ENCODE measurements at regions of chr1 and their contacts with region 1.

Region 1: DNA sequence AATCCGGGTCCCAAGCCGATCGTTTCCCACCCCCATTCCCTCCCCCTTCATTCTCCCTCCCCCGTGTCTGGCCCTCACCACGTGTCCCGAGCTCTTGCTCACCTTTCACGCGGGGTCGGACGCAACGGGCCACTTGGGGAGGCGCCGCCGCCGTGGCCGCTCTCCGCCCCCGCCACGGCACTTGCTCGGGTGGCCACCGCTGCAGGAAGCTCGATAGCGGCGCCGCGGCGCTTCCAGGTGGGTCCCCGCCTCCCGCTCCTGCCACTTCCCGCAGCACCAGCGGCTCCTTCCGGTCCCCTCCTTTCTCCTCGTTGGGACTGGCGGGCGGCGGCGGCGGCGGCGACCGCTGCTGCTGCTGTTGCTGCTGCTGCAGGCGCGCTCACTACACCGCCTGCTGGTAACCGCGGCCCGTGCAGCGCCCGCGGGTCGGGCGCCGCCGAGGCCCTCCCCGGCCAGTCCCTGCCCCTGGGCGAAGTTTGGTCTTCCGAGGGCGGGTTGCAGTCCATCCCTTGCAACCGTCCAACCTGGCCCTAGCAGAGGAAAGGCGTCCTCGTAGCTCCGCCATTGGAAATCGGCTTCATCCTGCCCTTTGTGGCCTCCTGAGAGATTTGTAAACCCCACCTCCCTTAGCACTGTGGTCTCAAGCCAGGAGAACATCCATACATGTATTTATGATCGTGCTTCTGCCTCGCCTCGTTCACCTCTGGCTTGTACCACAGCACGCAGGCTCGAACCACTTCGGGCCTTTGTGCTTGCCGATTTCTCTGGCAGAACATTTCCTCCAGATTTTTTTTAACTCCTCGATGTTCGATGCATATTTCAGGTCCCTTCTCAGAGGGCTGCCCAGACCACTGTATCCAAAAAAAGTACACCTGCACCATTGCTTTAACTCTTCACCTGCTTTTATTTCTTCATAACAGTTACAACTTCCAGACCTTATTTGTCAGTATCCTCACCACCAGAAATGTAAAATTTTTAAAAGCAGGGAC is 996 bp upstream of the ZZZ3 start:
- DNase-seq: peak; percentile 90
- ATAC-seq: peak; percentile 79
- H3K4me3 Mint-ChIP-seq: peak overlapping the region; percentile 91
- H3K27ac Mint-ChIP-seq: peak overlapping the region; percentile 96
- H3K4me1 Mint-ChIP-seq: peaks cover 39% of the 10 kb centered on the region
- H3K27me3 Mint-ChIP-seq: no peaks in the 10 kb centered on the region
- CTCF ChIP-seq: peak; percentile 71

Region 2: GRCh38 chr1:76074321-76075187 is 1608.9 kb before region 1 on chr1 and contains the start of gene ST6GALNAC3:
- CTCF ChIA-PET with region 1: no interaction called
- POLR2A ChIA-PET with region 1: interaction called, 3 read pairs
- intact Hi-C with region 1: loop called (anchors 10 kb)
- DNase-seq: peak; percentile 72
- ATAC-seq: peak; percentile 86
- H3K4me3 Mint-ChIP-seq: peak within 1 kb of the TSS; percentile 88
- H3K27ac Mint-ChIP-seq: peak within 1 kb of the TSS; percentile 81
- H3K4me1 Mint-ChIP-seq: peaks cover 35% of the 10 kb centered on the region
- H3K27me3 Mint-ChIP-seq: peaks cover 9% of the 10 kb centered on the region
- CTCF ChIP-seq: no peak
- total RNA-seq, gene ST6GALNAC3: 9.1 and 12.6 TPM in 2 replicates

Region 3: GRCh38 chr1:77219166-77219887 is 464.1 kb before region 1 on chr1 and contains the start of gene PIGK:
- CTCF ChIA-PET with region 1: no interaction called
- POLR2A ChIA-PET with region 1: interaction called, 8 read pairs
- intact Hi-C with region 1: loop called (anchors 1 kb)
- DNase-seq: peak; percentile 77
- ATAC-seq: peak; percentile 98
- H3K4me3 Mint-ChIP-seq: peak within 1 kb of the TSS; percentile 95
- H3K27ac Mint-ChIP-seq: peak within 1 kb of the TSS; percentile 89
- H3K4me1 Mint-ChIP-seq: peaks cover 26% of the 10 kb centered on the region
- H3K27me3 Mint-ChIP-seq: no peaks in the 10 kb centered on the region
- CTCF ChIP-seq: no peak
- total RNA-seq, gene PIGK: 10.8 and 11.1 TPM in 2 replicates

Region 4: GRCh38 chr1:77759071-77760028 is 75.9 kb after region 1 on chr1 and contains the start of gene USP33:
- CTCF ChIA-PET with region 1: no interaction called
- POLR2A ChIA-PET with region 1: interaction called, 3 read pairs
- intact Hi-C with region 1: loop called (anchors 1 kb)
- DNase-seq: peak; percentile 95
- ATAC-seq: peak; percentile 97
- H3K4me3 Mint-ChIP-seq: peak within 1 kb of the TSS; percentile 93
- H3K27ac Mint-ChIP-seq: peak within 1 kb of the TSS; percentile 87
- H3K4me1 Mint-ChIP-seq: peaks cover 32% of the 10 kb centered on the region
- H3K27me3 Mint-ChIP-seq: peaks cover 2% of the 10 kb centered on the region
- CTCF ChIP-seq: no peak
- total RNA-seq, gene USP33: 42.1 and 58.4 TPM in 2 replicates

Region 5: DNA sequence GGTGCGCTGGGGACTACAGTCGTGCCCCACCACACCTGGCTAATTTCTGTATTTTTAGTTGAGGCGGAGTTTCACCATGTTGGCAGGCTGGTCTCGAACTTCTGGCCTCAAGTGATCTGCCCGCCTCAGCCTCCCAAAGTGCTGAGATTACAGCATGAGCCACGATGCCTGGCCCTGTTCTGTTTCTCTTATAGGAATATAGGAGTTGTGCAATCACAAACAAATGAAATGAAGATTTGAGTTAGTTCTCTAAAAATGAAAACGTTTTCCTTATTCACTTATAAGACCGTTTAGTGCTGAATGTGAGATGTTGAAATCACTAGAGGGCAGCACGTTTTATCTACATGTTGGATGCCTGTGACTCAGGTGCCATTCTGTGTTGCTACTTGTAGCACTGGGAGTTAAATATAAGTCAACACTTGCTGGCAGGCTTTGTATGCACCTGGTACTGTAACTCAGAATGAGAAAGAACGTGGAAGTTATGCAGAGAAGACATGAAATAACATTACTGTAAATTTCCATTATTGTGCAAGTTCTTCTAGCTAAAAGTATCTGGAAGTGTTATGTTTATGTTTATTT is 141.8 kb after region 1 on chr1:
- CTCF ChIA-PET with region 1: no interaction called
- POLR2A ChIA-PET with region 1: no interaction called
- intact Hi-C with region 1: no loop called
- DNase-seq: no peak
- ATAC-seq: peak; percentile 62
- H3K4me3 Mint-ChIP-seq: no peak overlapping the region
- H3K27ac Mint-ChIP-seq: no peak overlapping the region
- H3K4me1 Mint-ChIP-seq: peaks cover 5% of the 10 kb centered on the region
- H3K27me3 Mint-ChIP-seq: no peaks in the 10 kb centered on the region
- CTCF ChIP-seq: no peak

Region 6: DNA sequence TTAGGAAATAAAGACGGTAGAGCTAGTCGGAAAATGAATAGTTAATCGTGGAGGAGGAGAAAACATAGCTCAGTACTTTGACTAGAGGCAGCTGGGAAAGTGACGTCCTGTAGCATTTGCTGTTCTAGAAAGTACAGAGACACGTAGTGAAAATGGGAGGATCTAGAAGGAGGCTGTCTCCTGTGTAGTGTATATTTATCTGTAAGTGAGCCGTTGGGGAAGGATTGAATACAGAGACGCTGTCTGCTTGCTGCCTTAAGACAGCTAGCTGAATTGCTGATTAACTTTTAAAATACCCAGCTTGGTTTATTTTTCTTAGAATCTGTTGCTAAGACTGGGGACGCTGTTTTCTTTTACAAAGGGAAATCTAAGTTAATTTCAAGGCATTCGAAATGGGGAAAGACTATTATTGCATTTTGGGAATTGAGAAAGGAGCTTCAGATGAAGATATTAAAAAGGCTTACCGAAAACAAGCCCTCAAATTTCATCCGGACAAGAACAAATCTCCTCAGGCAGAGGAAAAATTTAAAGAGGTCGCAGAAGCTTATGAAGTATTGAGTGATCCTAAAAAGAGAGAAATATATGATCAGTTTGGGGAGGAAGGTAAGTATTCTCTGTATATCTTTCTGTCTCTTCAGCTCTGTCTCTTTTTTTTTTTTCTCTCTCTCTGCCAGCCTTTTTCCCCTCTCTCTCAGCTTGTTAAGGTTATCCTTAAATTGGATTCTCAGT is 321.4 kb after region 1 on chr1 and contains the start of gene DNAJB4:
- CTCF ChIA-PET with region 1: no interaction called
- POLR2A ChIA-PET with region 1: interaction called, 26 read pairs
- intact Hi-C with region 1: loop called (anchors 1 kb)
- DNase-seq: no peak
- ATAC-seq: peak; percentile 94
- H3K4me3 Mint-ChIP-seq: peak within 1 kb of the TSS; percentile 92
- H3K27ac Mint-ChIP-seq: peak within 1 kb of the TSS; percentile 99
- H3K4me1 Mint-ChIP-seq: peaks cover 50% of the 10 kb centered on the region
- H3K27me3 Mint-ChIP-seq: peaks cover 2% of the 10 kb centered on the region
- CTCF ChIP-seq: no peak
- total RNA-seq, gene DNAJB4: 9.9 and 11.9 TPM in 2 replicates